Naive thymus-derived CD4-positive, alpha-beta T cell (primary cell): ENCODE measurements at regions of chr21 and their contacts with region 1.

Region 1: DNA sequence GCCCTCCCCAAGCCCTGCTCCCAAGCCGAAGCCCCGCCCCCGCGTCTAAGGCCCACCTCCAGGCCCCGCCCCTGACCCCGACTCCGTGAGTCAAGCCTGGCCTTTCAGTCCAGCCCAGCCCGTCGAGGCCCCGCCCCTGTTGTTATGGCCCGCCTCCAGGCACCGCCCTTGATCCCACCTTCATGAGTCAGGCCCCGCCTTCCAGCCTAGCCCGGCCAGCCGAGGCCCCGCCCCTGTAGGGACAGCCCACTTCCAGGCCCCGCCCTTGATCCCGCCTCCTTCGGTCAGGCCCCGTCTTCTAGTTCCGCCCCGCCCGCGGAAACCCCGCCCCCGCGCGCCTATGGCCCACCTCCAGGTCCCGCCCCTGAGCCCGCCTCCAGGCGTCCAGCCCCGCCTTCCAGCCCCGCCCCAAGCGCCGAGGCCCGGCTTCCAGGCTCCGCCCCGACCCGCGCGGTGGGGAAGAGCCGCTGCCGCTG is 247 bp upstream of the DOP1B start:
- DNase-seq: peak; percentile 99 to 100 (median 100)
- ATAC-seq: peak; percentile 94
- H3K4me3 ChIP-seq: peak overlapping the region; percentile 81
- H3K4me3 Mint-ChIP-seq: peak overlapping the region; percentile 71 to 91 (median 86)
- H3K27ac ChIP-seq: peak overlapping the region; percentile 81
- H3K27ac Mint-ChIP-seq: peak overlapping the region in 8 of 9 donors; percentile 46 to 88 (median 58)
- H3K4me1 ChIP-seq: peaks cover 11% of the 10 kb centered on the region in 2 donors
- H3K4me1 Mint-ChIP-seq: peaks cover 11 to 45% (median 33%) of the 10 kb centered on the region in 7 donors
- H3K27me3 ChIP-seq: no peaks in the 10 kb centered on the region
- H3K27me3 Mint-ChIP-seq: peaks cover 0 to 13% (median 0%) of the 10 kb centered on the region in 5 donors

Region 2: GRCh38 chr21:36069713-36070573 is 86.4 kb before region 1 on chr21 and contains the start of gene CBR1:
- CTCF ChIA-PET with region 1: no interaction called
- POLR2A ChIA-PET with region 1: no interaction called
- intact Hi-C with region 1: loop called in 1 of 2 experiments (anchors 1 kb)
- DNase-seq: peak; percentile 62 to 90 (median 84)
- ATAC-seq: peak; percentile 98
- H3K4me3 ChIP-seq: peak within 1 kb of the TSS; percentile 73
- H3K4me3 Mint-ChIP-seq: peak within 1 kb of the TSS; percentile 83 to 93 (median 90)
- H3K27ac ChIP-seq: peak within 1 kb of the TSS; percentile 65
- H3K27ac Mint-ChIP-seq: peak within 1 kb of the TSS; percentile 63 to 93 (median 82)
- H3K4me1 ChIP-seq: peaks cover 5 to 21% of the 10 kb centered on the region in 2 donors
- H3K4me1 Mint-ChIP-seq: peaks cover 12 to 47% (median 41%) of the 10 kb centered on the region in 7 donors
- H3K27me3 ChIP-seq: no peaks in the 10 kb centered on the region
- H3K27me3 Mint-ChIP-seq: no peaks in the 10 kb centered on the region
- total RNA-seq, gene CBR1: 6.0 to 51.1 (median 22.1) TPM

Region 3: DNA sequence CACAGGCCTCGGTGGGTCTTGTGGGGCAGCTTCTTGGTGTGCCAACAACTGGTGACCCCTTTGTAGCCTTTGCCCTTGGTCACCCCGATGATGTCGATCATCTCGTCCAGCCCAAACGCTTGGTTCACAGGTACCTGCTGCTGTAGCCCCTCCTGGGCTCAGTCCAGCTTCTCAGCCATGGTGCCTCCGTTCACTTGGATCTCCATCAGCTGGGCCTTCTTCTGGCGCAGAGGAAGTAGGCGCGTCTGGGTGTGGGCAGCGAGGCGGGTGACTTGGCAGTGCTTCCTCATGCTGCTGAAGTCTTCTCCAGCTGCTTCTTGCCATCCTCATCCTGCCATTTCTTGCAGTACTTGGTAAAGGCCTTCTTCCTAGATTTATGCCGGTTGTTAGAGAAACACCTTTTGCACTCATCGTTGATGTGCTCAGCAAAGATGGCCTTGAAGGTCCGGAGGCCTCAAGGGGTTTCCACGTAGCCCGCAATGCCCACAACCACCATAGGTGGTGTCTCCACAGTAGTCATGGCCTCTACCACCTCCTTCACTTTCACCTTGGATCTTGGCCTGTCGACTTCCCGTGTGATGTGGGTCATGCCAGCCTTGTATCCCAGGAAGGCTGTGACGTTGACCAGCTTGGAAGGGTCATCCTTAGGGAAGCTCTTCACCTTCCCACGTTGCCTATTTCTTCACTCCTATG is 13.2 kb after region 1 on chr21:
- CTCF ChIA-PET with region 1: interaction called, 15 read pairs
- POLR2A ChIA-PET with region 1: interaction called, 7 read pairs
- intact Hi-C with region 1: loop called (anchors 1 kb)
- DNase-seq: no peak
- ATAC-seq: no peak
- H3K4me3 ChIP-seq: no peak overlapping the region
- H3K4me3 Mint-ChIP-seq: no peak overlapping the region
- H3K27ac ChIP-seq: no peak overlapping the region
- H3K27ac Mint-ChIP-seq: peak overlapping the region in 1 of 9 donors; percentile 69
- H3K4me1 ChIP-seq: peaks cover 5 to 9% of the 10 kb centered on the region in 2 donors
- H3K4me1 Mint-ChIP-seq: peaks cover 0 to 15% (median 10%) of the 10 kb centered on the region in 7 donors
- H3K27me3 ChIP-seq: no peaks in the 10 kb centered on the region
- H3K27me3 Mint-ChIP-seq: no peaks in the 10 kb centered on the region

Region 4: GRCh38 chr21:36260030-36260787 is 103.8 kb after region 1 on chr21:
- CTCF ChIA-PET with region 1: no interaction called
- POLR2A ChIA-PET with region 1: no interaction called
- intact Hi-C with region 1: loop called in 1 of 2 experiments (anchors 1 kb)
- DNase-seq: peak in 7 of 9 donors; percentile 54 to 76 (median 68)
- ATAC-seq: peak; percentile 88
- H3K4me3 ChIP-seq: peak overlapping the region; percentile 57
- H3K4me3 Mint-ChIP-seq: peak overlapping the region; percentile 81 to 91 (median 86)
- H3K27ac ChIP-seq: peak overlapping the region; percentile 76
- H3K27ac Mint-ChIP-seq: peak overlapping the region; percentile 89 to 97 (median 93)
- H3K4me1 ChIP-seq: peaks cover 0 to 6% of the 10 kb centered on the region in 2 donors
- H3K4me1 Mint-ChIP-seq: peaks cover 9 to 24% (median 18%) of the 10 kb centered on the region in 7 donors
- H3K27me3 ChIP-seq: no peaks in the 10 kb centered on the region
- H3K27me3 Mint-ChIP-seq: no peaks in the 10 kb centered on the region

Region 5: DNA sequence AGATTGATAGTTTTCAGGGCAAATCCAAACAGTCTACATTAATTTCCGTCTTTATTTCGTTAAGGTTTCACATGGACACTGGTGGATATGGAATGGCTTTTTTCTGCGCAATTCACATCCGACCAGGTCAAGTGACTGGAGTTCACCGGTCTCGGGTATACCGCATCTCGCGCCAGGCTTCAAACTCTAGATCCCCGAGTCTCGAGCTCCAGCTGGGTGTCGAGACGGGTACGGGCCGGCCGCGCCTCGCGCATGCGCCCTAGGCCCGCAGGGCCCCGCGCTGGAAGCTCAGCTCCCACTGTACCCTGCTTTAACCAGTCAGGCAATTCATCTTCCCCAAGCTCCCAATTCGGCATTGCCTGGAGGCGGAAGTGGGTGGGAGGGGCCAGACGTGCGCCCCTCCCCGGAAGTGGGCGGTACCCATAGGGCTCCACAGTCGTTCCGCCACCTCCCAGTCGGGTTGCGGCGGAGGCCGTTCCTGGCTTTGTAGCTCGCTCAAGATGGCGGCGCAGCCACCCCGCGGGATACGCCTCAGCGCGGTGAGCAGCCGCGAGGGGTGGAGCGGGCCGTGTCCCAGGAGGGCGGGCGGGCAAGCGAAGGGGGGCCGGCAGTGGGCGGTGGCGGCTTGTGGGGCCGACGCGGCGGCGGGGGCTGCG is 163.5 kb after region 1 on chr21 and contains the start of gene MORC3:
- CTCF ChIA-PET with region 1: no interaction called
- POLR2A ChIA-PET with region 1: interaction called, 10 read pairs
- intact Hi-C with region 1: loop called (anchors 1 kb)
- DNase-seq: peak; percentile 95 to 98 (median 97)
- ATAC-seq: peak; percentile 96
- H3K4me3 ChIP-seq: peak within 1 kb of the TSS; percentile 78
- H3K4me3 Mint-ChIP-seq: peak within 1 kb of the TSS; percentile 90 to 100 (median 96)
- H3K27ac ChIP-seq: peak within 1 kb of the TSS; percentile 93
- H3K27ac Mint-ChIP-seq: peak within 1 kb of the TSS; percentile 94 to 99 (median 97)
- H3K4me1 ChIP-seq: peaks cover 11 to 22% of the 10 kb centered on the region in 2 donors
- H3K4me1 Mint-ChIP-seq: peaks cover 29 to 40% (median 37%) of the 10 kb centered on the region in 7 donors
- H3K27me3 ChIP-seq: no peaks in the 10 kb centered on the region
- H3K27me3 Mint-ChIP-seq: peaks cover 0 to 5% (median 0%) of the 10 kb centered on the region in 5 donors
- total RNA-seq, gene MORC3: 48.2 to 123 (median 62.0) TPM

Region 6: GRCh38 chr21:36989699-36990507 is 833.5 kb after region 1 on chr21:
- CTCF ChIA-PET with region 1: no interaction called
- POLR2A ChIA-PET with region 1: no interaction called
- intact Hi-C with region 1: loop called in 1 of 2 experiments (anchors 2 kb)
- DNase-seq: peak; percentile 63 to 95 (median 74)
- ATAC-seq: peak; percentile 90
- H3K4me3 ChIP-seq: peak overlapping the region; percentile 66
- H3K4me3 Mint-ChIP-seq: peak overlapping the region; percentile 83 to 95 (median 90)
- H3K27ac ChIP-seq: peak overlapping the region; percentile 69
- H3K27ac Mint-ChIP-seq: peak overlapping the region; percentile 71 to 94 (median 87)
- H3K4me1 ChIP-seq: peaks cover 0 to 4% of the 10 kb centered on the region in 2 donors
- H3K4me1 Mint-ChIP-seq: peaks cover 4 to 36% (median 28%) of the 10 kb centered on the region in 7 donors
- H3K27me3 ChIP-seq: no peaks in the 10 kb centered on the region
- H3K27me3 Mint-ChIP-seq: peaks cover 0 to 3% (median 0%) of the 10 kb centered on the region in 5 donors

Region 7: GRCh38 chr21:37366482-37367316 is 1210.3 kb after region 1 on chr21 and contains the start of gene DYRK1A:
- CTCF ChIA-PET with region 1: no interaction called
- POLR2A ChIA-PET with region 1: no interaction called
- intact Hi-C with region 1: loop called (anchors 5 kb)
- DNase-seq: peak; percentile 95 to 99 (median 99)
- ATAC-seq: peak; percentile 91
- H3K4me3 ChIP-seq: peak within 1 kb of the TSS; percentile 75
- H3K4me3 Mint-ChIP-seq: peak within 1 kb of the TSS; percentile 93 to 100 (median 100)
- H3K27ac ChIP-seq: peak within 1 kb of the TSS; percentile 99
- H3K27ac Mint-ChIP-seq: peak within 1 kb of the TSS; percentile 98 to 100 (median 100)
- H3K4me1 ChIP-seq: peaks cover 20 to 33% of the 10 kb centered on the region in 2 donors
- H3K4me1 Mint-ChIP-seq: peaks cover 34 to 53% (median 44%) of the 10 kb centered on the region in 7 donors
- H3K27me3 ChIP-seq: no peaks in the 10 kb centered on the region
- H3K27me3 Mint-ChIP-seq: peaks cover 0 to 5% (median 0%) of the 10 kb centered on the region in 5 donors
- total RNA-seq, gene DYRK1A: 86.0 to 142 (median 125) TPM